GM13976 (cell line): ENCODE measurements at regions of chr5 and their contacts with region 1.

Region 1: GRCh38 chr5:131786900-131787692 is 9.7 kb downstream of the FNIP1 start:
- DNase-seq: no peak
- CTCF ChIP-seq: no peak

Region 2: GRCh38 chr5:131182839-131183238 is 604.3 kb before region 1 on chr5:
- in situ Hi-C with region 1: no loop called
- DNase-seq: no peak
- CTCF ChIP-seq: no peak

Region 3: DNA sequence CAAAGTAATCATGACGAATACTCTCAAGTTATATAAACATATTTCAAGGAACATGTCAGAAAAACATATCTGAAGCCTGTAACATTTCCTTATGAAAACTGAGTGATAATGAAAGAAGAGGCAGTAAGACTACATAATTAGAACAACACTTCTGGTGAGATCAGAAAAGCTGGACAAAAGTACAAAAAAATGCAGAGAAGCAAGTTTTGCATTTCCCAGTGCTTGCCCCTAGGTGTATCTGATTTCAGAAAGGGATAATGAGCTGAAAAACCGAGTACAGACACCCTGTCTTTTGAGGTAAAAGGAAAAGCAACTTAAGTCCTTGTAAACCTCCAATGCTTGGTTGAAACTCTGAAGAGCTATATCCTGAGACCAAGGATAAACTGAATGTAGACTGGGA is 333.3 kb before region 1 on chr5:
- in situ Hi-C with region 1: no loop called
- DNase-seq: no peak
- CTCF ChIP-seq: no peak

Region 4: GRCh38 chr5:131589510-131590348 is 197.4 kb before region 1 on chr5:
- in situ Hi-C with region 1: loop called (anchors 10 kb)
- DNase-seq: peak; percentile 54
- CTCF ChIP-seq: peak; percentile 61

Region 5: DNA sequence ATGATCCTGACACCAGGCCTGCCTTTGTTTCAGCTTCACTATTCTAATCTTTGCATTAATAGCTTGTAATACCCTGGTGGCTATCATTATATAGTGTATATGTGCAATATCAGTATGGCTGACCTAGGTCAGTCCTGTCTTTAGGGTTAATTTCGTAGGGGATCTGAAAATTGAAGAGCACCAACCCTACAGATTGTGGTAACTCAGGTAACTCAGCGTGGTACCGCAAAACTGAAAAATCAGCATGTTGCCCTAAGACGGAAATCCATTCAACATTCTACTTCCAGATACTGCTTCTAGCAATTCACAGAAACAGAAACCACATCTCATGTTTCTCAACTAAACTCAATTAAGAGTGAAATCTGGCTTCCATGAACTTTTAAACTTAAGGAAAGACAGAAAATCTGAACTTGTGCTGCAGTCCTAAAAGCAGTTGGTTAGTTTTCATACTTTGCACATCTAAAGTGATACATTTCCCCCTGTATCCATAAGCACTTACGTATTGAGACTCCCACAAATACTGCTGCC is 68.5 kb before region 1 on chr5:
- in situ Hi-C with region 1: no loop called
- DNase-seq: no peak
- CTCF ChIP-seq: no peak